ENCODE measurements at regions of chr10 and their contacts with region 1.

Region 1: DNA sequence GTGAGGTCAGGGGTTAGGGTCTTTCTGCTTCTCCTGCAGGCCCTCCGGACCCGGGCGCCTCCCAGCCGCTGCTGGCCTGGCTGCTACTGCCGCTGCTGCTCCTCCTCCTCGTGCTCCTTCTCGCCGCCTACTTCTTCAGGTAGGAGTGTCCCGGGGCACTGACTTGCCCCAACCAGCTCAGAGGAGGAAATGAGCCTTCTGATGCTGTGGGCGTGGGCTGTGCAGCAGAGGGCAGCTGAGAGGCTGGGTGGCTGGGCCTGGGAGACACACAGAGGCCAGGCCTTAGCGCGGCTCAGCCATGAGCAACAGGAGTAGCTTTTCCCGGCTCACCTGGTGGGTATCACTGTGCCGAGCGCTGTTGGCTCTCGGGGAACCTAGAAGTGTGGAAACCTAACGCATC is 78.9 kb downstream of the MKI67 start:
- DNase-seq: peak; percentile 63 to 89 (median 76)
- ATAC-seq: peak; percentile 96 to 98
- H3K4me3 Mint-ChIP-seq: peak overlapping the region; percentile 82 to 99 (median 92)
- H3K27ac Mint-ChIP-seq: peak overlapping the region; percentile 90 to 99 (median 94)
- H3K4me1 Mint-ChIP-seq: peaks cover 17 to 70% (median 58%) of the 10 kb centered on the region in 4 donors
- H3K27me3 Mint-ChIP-seq: no peaks in the 10 kb centered on the region

Region 2: DNA sequence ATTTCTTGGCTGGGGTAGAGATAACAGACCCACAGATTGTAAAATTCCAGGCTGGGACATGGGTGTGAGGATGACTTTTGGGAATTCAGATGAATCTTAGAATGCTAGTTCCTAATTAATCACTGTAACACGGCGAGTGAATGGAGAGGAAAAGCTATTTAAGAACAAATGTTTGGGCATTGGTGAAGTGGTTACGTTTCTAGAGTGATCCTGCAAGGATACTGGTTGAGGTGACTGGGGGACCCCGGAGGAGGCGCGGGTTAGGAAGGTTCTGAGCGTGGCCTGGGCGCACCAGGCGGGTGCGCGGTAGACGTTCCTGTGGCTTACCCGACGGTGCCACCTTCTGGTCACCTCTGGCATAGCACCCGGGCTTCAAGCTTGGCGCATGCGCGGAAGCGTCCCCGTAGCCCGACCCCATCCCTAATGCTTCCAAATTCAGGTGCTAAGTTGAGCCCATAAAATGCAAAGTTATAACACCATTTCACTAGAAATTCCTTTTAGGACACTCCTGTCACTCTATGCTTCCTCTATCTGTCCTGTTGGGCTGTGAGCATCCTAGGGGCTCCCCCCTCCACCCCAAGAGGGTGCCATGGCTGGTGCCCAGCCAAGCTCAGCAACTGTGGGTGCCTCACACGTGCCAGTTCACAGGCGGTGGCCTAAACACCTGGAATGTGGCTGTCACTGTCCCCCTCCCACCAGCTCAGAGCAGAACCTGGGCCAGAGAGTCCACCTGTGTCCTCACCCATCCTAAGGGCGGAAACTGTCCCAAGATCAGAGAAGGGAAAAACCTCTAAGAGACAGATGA is 36.0 kb before region 1 on chr10:
- POLR2A ChIA-PET with region 1: no interaction called
- DNase-seq: peak; percentile 74 to 97 (median 86)
- ATAC-seq: peak; percentile 94 to 98
- H3K4me3 Mint-ChIP-seq: peak overlapping the region in 7 of 10 donors; percentile 17 to 58 (median 49)
- H3K27ac Mint-ChIP-seq: peak overlapping the region in 4 of 10 donors; percentile 31 to 82 (median 38)
- H3K4me1 Mint-ChIP-seq: peaks cover 4 to 10% (median 8%) of the 10 kb centered on the region in 4 donors
- H3K27me3 Mint-ChIP-seq: peaks cover 0 to 6% (median 4%) of the 10 kb centered on the region in 5 donors

Region 3: DNA sequence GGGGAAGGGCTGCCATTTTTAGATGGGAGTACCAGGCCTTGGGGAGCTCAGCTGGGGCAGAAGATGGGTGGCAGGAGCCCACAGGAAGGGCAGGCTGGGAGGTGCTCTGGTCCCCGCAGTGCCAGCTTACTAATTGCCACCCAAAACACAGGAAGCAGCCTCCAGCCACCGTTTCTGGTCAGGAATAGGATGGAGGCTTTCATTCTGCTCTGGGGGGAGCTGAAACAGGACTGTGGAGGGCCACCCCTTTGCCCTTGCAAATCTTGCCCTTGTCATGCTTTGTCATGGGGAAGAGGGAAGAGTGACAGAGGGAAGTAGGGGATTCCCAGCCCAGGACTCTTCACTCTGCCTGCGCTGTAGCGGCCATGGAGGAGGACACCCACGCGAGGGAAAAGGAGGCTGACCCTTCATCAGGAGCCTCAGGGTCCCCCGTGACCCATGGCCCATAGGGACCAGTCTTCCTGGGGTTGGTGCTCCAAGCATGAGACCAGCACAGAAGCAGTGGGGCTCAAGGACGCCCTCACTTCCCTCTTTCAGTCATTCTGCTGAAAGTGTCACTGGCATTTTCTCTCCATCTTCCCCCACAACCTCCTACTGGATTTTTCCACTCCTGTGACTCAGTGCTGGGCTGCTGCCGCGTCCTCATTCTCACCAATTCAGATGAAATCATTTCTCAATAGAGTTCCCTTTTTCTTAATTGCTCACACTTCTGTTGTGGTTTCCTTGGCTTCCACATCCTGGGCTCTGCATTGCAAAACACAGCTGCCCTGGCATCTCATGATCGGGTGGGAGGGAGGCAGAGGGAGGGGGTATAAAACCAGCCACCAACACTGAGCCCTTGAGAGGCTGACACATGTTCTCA is 17.0 kb after region 1 on chr10:
- POLR2A ChIA-PET with region 1: interaction called, 78 read pairs
- DNase-seq: peak in 9 of 10 donors; percentile 29 to 81 (median 64)
- ATAC-seq: peak; percentile 71 to 77
- H3K4me3 Mint-ChIP-seq: peak overlapping the region; percentile 67 to 91 (median 80)
- H3K27ac Mint-ChIP-seq: peak overlapping the region; percentile 67 to 95 (median 88)
- H3K4me1 Mint-ChIP-seq: peaks cover 53 to 83% (median 81%) of the 10 kb centered on the region in 4 donors
- H3K27me3 Mint-ChIP-seq: no peaks in the 10 kb centered on the region

Region 4: GRCh38 chr10:128078136-128078969 is 31.0 kb after region 1 on chr10:
- POLR2A ChIA-PET with region 1: no interaction called
- DNase-seq: peak in 6 of 10 donors; percentile 22 to 49 (median 37)
- ATAC-seq: peak; percentile 66 to 72
- H3K4me3 Mint-ChIP-seq: no peak overlapping the region
- H3K27ac Mint-ChIP-seq: peak overlapping the region in 3 of 10 donors; percentile 13 to 37 (median 33)
- H3K4me1 Mint-ChIP-seq: peaks cover 0 to 7% (median 2%) of the 10 kb centered on the region in 4 donors
- H3K27me3 Mint-ChIP-seq: no peaks in the 10 kb centered on the region

Measured in naive thymus-derived CD8-positive, alpha-beta T cell (primary cell).